GM18951 (cell line): ENCODE measurements at regions of chr9 and their contacts with region 1.

Region 1: GRCh38 chr9:113446323-113446740 is 17.2 kb upstream of the RGS3 start:
- POLR2A ChIP-seq: no peak

Region 2: GRCh38 chr9:113591001-113591898 is 144.9 kb after region 1 on chr9:
- in situ Hi-C with region 1: loop called (anchors 10 kb)
- POLR2A ChIP-seq: peak; percentile 23

Region 3: DNA sequence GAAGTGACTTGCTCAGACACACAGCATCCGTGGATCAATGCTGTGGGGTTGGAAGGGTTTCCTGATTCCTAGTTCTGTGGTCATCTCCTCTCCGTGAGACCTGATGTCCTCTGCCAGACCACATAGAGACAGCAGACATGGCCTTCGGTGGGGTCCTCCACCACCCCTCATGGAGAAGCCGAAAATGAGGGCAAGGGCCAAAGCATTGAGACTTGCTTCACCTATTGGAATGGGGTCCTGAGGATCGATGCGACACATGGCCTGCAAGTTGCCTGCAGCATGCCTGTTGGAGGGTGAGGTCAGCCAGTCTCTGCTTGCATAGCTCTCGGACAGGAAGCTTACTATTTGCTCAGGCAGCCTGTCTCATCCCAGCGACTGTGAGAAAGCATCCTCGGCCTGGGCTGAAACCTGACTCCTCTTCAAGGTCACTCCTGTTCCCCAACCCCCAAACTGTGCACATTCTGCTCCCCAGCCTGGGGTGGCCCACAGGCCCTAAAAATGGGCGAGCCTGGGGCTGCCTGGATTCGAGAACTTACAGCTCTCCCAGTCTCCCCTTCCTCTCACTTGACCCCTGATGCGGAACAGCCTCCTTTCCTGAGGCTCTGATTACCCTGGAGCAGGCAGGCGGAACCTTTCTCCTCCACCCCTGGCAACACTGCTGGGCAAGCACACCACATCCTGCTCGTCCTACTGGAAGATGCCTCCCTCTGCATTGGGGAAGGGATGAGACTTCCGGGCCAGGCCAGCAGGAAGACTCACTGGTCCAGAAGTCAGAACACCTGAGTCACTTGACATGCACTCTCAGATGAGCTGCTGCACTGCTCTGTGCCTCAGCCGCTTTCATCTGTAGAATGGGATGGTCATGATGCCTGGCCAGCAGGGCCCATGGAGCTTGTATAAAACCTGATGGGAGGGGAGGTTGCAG is 204.1 kb after region 1 on chr9:
- in situ Hi-C with region 1: loop called (anchors 5 kb)
- POLR2A ChIP-seq: no peak